ENCODE measurements at regions of chr17 and their contacts with region 1.

Region 1: GRCh38 chr17:10875979-10876555 is 38.2 kb upstream of the PIRT start:
- DNase-seq: peak; percentile 35
- ATAC-seq: peak; percentile 41 to 62

Region 2: DNA sequence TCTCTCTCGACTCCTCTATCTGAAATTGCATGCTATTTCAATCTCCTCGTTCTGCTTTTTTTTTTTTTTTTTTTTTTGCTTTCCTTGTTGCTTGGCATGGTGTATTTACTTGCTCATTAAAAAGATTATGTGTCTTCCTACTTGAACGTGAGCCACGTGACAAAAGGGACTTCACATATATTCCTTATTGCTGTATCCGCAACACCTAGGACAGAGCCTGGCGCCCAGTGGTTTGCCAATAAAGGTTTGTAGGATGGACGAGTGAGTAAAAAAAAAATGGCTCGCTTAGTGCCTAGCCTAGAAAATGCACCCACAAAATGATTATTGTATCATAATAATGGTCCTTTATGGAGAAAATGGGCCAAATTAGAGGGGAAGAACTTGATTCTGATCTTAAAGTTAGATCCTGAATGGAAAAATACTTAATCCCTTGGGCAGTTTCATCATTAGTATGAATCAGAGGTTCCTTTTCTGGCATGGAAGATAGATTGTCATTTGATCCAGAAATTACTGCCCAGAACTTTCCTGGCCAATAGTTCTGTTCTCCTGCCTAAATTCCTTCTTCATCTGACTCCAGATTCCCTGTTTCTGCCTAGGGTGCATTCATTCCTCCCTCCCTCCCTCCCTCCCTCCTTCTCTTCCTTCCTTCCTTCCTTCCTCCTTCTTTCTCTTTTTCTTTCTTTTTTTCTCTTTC is 132.6 kb before region 1 on chr17:
- intact Hi-C with region 1: no loop called
- DNase-seq: no peak
- ATAC-seq: peak; percentile 66 to 87

Region 3: DNA sequence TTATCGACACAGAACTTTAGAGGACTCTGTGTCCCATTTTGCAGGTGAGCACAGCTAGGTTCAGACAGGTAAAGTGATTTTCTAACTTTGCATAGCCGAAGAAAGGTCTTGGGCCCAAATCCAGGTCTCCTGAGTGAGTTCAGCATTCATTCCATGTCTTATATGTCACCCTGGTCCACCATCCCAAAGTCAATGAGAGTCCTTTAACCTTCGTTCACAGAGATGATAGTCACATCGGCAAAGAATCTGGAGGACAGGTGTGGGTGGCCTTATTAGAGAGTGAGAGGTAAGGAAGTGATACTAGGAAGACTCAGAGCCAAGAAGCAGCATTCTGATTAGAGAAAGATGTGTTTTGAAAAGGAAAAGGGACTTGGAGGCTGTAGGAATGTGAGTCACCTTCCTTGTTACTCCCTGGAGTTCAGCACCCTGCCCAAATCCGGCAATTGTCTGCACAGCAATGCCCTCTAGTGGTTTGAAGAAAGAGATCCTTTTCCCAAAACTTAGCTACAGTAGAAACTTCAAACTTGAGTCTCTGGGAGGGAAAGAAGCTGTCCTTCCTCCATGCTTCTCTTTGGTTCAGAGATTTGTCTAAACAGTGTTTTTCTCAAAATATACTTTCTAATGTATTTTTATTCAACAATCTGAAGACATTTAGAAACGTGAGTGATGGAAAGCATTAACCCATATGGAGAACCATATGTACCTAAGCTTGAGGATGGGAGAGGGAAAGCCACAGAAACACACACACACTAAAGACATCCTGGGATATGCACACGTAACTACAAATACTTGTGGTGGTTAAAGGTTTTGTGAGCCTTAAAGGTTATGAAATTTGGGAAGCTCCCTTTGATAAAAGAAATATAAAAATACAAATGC is 268.5 kb after region 1 on chr17:
- intact Hi-C with region 1: loop called (anchors 2 to 5 kb)
- DNase-seq: peak; percentile 31
- ATAC-seq: peak in 1 of 2 donors; percentile 72

Region 4: DNA sequence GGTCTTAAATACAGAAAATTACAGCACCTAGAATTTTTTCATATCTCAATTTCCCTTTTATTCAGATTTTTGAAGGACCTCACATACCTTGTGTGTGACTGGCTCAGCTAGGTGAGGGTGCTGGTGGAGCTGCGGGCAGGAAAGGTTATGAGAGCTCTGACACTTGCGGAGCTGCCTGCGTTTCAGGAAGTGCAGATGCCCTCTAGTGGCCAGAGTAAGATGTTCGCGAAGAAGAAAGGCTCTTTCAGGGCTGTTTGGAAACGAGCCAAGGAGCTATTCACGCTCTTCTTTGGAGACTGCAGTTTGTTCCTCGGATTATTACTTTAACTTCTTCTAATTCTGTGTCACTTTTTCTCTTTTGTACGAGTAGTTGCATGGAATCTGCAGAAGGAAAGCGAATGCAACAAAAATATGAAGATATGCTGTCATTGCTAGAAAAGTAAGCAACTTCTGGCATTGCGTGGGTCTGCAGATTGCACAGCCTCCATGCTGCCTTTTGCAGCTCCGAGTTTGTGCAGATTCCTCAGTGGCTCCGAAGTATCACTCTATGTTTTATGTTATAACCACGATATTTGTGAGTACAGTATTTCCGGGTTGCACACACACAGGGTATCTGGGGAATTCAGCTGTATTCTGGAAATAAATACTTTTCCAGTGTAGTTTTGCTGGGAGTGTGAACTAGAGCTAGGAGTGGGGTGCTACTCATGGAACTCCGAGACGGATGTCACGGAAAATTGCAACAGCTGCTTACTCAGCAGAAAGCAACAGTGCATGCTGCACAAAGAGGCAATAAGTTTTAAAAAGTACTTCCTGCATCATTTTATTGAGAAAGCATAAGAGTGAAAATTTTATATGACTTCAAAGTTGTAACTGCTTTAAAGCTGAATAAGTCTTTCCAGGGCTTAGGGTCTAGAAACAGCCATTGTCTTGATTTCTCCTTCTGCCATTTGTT is 768.5 kb after region 1 on chr17:
- intact Hi-C with region 1: loop called (anchors 2 to 10 kb)
- DNase-seq: peak; percentile 69
- ATAC-seq: peak; percentile 35 to 79

Region 5: GRCh38 chr17:11880714-11881113 is 1004.6 kb after region 1 on chr17:
- intact Hi-C with region 1: loop called in 1 of 2 experiments (anchors 5 kb)
- DNase-seq: no peak
- ATAC-seq: peak in 1 of 2 donors; percentile 71

Region 6: GRCh38 chr17:11935734-11936406 is 1059.8 kb after region 1 on chr17:
- intact Hi-C with region 1: loop called (anchors 5 to 10 kb)
- DNase-seq: peak; percentile 57
- ATAC-seq: no peak

Region 7: DNA sequence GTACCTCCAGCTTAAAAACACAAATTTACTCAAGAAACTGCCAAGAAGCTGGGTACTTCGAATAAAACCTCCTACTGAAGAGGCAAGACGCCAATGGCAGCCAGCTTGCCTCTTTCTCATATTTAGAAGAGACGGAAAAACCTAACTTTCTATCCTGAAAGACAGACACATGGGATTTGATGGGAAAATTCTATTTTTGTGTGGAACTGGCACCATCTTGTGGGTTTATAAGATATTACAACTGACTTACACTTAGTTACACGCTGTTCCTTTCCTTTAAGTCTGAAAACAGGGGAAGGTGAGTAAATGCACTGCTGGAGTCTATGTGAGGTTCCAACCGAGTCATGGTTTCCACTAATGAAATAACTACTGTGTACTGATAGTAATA is 1110.9 kb after region 1 on chr17:
- intact Hi-C with region 1: loop called in 1 of 2 experiments (anchors 5 kb)
- DNase-seq: no peak
- ATAC-seq: peak; percentile 68 to 72

Measured in left cardiac atrium (tissue), 4 donors.